Right ventricle myocardium inferior (tissue), 1 donor: ENCODE measurements at regions of chr2 and their contacts with region 1.

Region 1: DNA sequence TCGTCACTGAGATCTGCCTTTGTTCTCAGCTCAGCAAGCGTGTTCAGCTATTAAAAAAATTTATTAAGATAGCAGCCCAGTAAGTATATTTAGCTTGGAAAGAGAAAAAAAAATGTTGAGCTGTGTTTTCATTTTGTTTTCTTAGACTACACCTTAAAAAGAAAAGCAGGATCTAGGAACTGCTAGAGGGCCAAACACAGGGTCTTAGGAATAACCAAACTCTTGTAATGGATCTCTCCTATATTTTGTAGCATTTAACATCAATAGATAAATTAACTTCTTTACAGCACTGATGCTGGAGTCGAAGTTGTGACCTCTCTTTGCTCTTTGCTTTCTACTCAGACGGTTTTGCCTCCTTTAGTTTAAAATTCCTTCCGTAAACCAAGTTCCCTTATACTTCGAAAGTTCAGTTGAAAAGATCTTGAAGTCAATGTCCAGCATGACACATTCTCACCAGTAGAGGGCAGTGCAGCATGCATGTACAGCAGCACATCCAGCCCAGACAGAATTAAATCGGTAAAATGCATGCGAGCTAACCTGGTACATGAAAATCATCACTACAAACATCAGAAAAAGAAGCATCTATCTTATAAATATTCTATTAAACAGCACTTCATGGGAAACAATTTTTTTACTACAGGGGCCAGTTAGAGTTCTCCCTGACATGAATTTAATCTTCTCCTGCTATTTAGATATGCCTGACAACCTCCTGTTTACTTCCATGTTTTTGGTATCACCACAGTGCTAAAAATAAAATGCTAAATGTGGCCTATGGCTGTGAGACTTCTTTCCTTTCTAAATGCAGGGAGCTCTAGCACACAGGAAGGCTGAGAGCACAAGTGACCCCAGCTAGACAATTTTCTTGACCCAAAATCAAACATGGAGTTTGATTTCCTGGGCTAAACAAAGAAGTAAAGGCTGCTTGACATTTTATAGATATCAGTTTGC is 48.2 kb upstream of the MAP3K20 start:
- DNase-seq: no peak
- ATAC-seq: peak; percentile 81

Region 2: DNA sequence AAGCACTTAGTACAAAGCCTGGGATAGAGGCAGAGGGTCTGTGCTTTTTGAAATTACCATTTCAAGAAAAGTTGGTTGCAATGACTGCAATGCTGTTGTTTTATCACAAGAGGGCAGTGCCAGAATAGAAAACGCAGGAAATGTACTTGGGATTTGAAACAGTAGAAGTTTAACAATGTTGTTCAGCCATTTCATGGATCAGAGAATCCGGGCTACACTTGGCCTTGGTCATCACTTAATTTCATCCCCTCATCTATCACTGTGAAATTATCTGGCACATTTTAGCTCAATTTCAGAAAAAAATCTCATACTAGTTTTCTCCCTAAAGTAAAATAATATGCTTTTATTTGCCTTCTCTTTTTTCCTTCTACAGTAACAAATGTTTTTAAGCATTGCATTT is 221.0 kb before region 1 on chr2:
- intact Hi-C with region 1: loop called (anchors 10 kb)
- DNase-seq: no peak
- ATAC-seq: peak; percentile 61

Region 3: GRCh38 chr2:173075781-173076580 is 48.5 kb after region 1 on chr2 and contains the start of gene MAP3K20:
- intact Hi-C with region 1: loop called (anchors 1 kb)
- DNase-seq: peak; percentile 90
- ATAC-seq: peak; percentile 89
- total RNA-seq, gene MAP3K20: 435 TPM

Region 4: DNA sequence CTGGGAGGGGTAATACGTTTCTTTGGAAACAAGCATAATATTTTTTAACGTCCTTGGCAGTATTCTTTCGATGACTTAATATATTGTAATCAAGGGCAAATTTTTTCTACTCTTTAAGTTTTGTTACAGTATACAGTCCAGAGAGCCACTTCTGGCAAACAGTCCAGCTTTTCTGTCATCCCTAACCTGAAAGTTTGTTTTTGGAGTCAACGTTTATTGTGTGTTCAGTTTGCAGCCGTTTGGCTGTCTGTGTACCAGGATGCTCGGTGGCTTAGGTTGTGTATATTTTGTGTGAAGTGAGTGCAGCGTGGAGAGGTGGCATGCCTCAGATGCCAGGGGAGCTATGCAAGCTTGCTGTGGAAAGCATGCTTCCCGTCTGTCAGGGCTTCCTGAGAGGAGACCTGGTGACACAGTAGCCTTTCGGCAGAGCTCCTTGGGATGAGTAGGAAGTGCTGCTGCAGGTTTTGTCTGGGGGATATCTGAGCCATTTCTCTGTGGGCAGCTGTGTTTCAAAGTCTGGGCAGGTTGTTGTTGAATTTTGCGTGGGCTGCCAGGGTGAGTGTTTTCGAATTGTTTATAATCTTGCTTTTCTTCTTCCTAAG is 62.9 kb after region 1 on chr2:
- intact Hi-C with region 1: loop called (anchors 5 kb)
- DNase-seq: no peak
- ATAC-seq: peak; percentile 82

Region 5: DNA sequence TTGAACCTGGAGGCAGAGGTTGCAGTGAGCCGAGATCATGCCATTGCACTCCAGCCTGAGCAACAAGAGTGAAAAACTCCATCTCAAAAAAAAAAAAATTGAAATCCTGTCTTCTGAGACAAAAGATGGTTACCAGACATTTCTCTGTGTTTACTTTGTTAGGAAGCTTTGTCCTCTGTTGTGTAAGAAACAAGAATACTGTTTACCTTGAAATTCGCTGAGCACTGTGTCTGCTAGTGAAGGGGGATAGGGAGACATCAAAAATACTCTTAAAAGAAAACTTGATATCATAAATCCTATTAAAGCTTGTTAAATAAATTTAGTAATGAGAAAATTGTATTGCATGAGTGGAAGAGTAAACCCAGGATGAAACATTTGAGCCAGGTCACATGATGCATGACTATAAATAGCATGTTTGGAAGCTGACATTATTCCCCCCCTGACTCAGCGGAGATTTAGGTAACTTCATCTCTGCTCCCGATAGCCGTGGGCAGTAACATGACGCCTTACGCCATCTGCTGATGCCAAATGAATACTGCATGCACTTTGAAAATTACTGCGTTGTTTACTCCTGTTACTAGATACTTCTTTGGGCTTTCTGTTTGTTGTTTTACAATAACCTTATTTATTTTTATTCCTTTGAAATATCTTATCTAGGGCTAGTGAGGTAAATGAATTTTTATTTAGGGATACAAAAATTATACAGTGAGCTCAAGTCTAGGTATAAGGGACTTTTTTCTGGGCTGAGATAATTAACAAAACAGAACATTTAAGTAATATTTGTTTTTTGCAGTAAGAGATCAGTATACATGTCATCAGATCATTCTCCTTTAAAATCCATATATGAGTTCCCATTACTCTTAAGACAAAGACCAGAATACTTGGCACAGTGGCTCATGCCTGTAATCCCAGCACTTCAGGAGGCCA is 183.1 kb after region 1 on chr2:
- intact Hi-C with region 1: loop called (anchors 1 kb)
- DNase-seq: no peak
- ATAC-seq: peak; percentile 90

Region 6: DNA sequence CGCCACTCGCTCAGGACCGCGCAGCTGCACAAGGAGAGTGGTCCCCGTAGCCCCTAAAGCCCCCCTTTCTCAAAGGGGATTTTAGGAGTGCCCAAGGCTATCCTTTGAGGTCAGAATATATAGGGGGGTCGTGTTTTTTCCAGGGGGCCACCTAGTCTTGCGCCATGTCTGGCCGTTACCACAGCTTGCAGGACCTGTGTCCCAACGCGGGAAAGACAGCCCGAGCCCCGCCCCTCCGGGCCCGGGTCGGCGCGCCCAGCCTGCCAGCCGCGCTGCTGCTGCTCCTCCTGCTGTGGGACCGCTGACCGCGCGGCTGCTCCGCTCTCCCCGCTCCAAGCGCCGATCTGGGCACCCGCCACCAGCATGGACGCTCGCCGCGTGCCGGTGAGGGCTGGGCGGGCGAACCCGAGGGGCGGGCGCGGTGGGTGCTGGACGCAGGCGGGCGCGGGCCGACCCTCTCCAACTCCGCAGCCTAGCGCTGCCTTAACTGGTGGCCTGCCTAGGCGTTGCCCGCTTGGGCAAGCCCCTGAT is 327.2 kb after region 1 on chr2 and contains the start of gene CDCA7:
- intact Hi-C with region 1: loop called (anchors 10 kb)
- DNase-seq: peak; percentile 77
- ATAC-seq: peak; percentile 90
- total RNA-seq, gene CDCA7: 1.5 TPM

Region 7: DNA sequence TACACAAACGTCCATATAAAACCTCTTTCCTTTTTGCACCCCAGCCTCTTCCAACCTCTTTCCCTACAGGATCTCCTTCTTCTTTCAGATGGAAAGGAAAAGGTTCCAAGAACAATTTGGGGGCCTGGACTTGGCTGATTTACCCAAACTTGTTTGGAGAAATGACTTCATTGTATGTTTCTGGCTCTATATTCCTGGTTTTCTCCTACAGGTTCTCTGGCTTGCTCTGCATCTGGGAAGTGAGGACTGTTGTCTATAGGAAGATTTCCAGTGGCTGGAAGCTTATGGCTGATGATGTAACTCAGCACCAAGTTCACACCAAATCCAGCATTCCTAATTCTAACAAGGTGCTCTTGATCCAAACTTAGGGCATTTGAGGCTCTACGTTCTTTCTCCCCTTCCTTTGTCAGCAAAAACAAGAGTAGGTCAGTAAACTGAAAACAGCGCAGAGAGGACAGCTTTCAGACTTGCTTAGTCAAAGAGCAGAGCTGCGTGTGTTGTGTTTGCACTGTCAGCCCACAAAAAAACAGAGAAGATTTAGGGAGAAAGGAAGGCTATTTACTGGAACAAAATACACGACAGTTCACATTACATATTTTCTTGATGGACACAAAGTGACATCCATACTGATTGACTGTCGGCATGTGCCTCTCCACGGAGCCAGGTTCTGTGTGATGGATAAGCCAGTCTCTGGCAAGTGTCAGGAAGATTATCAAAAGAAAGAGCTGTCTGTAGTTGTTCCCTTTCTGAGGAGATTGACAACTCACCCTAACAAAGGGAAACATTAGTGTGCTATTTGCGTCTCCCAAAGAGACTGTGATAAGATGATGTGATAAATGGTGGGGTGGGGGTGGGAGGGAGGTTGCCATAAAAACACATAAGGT is 366.9 kb after region 1 on chr2:
- intact Hi-C with region 1: no loop called
- DNase-seq: no peak
- ATAC-seq: no peak